ENCODE measurements at regions of chr11 and their contacts with region 1.

Region 1: DNA sequence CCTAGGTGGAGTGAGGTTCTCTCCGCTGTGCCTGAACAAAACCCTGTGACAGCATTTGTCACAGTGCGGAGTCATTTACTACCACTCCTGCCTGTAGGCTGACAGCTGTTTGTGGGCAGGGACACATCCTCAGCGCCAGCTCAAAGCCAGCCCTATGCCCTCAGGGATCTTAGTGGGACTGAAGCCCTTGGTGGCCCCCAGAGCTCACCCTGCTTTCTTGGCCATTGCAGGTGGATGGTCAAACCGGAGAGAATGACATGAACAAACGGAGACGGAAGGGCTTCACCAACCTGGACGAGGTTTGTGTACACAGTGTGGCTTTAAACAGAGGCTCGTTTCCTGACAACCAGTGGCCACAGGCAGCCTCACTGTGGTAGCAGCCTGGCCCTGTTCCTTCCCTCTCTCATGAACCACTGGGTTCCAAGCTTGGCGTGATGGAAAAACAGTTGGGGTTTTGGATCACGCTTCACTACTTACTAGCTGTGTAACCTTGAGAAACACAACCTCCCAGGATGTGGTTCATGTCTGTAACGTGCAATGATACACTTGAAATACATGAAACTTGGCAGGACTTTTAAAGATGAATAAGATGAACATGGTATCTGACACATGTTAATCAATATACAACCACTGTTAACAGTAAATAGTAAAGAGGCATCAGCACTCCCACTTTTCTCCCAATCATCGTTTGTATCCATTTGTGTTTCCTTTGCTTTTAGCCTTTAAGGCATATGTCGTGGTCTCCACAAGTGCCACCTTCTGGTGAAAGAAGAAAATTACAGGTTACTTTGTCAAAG is 125.8 kb downstream of the MICAL2 start:
- DNase-seq: peak; percentile 58 to 62
- ATAC-seq: peak; percentile 51 to 70; a peak in 4 of 6 replicates
- H3K4me3 ChIP-seq: no peak overlapping the region
- H3K27ac ChIP-seq: peak overlapping the region; percentile 81 to 87
- H3K4me1 ChIP-seq: peaks cover 58% of the 10 kb centered on the region
- CTCF ChIP-seq: peak; percentile 83
- EP300 ChIP-seq: no peak
- POLR2A ChIP-seq: no peak
- RAD21 ChIP-seq: peak; percentile 73 to 76

Region 2: DNA sequence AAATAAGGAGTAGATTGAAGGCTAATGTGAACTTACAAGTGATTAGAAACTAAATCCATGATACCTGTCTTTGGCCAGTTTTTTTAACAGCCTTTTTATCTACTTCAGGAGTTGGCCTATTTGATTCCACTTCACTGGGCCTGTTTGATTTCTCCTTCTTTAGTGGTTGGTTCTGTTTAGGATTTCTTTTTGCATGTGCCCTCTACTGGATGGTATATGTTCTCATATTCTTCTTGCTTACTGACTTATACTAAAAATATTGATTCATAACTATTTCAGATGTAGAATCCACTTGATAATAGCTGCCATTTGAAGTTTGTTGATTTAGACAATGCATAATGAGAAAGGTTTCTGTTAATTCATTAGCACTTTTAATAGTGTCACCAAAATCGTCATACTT is 340.5 kb before region 1 on chr11:
- CTCF ChIA-PET with region 1: no interaction called
- POLR2A ChIA-PET with region 1: no interaction called
- DNase-seq: peak in 1 of 2 experiments; percentile 13
- ATAC-seq: peak in 1 of 2 experiments; percentile 60; a peak in 2 of 6 replicates
- H3K4me3 ChIP-seq: no peak overlapping the region
- H3K27ac ChIP-seq: no peak overlapping the region
- H3K4me1 ChIP-seq: peaks cover 6% of the 10 kb centered on the region; the same call in 2 of the 3 replicates
- CTCF ChIP-seq: peak; percentile 28; the same call in 1 of the 3 replicates
- EP300 ChIP-seq: no peak
- POLR2A ChIP-seq: no peak
- RAD21 ChIP-seq: peak in 1 of 2 experiments; percentile 10; a peak in 1 of 5 replicates

Region 3: GRCh38 chr11:12066799-12067508 is 169.2 kb before region 1 on chr11:
- CTCF ChIA-PET with region 1: interaction called, 30 read pairs
- POLR2A ChIA-PET with region 1: interaction called, 4 read pairs
- DNase-seq: peak in 1 of 2 experiments; percentile 93
- ATAC-seq: peak; percentile 83 to 84
- H3K4me3 ChIP-seq: peak overlapping the region; percentile 8; the same call in 1 of the 3 replicates
- H3K27ac ChIP-seq: peak overlapping the region; percentile 97
- H3K4me1 ChIP-seq: peaks cover 66% of the 10 kb centered on the region
- CTCF ChIP-seq: no peak
- EP300 ChIP-seq: peak; percentile 51 to 79; a peak in 3 of 5 replicates
- POLR2A ChIP-seq: no peak
- RAD21 ChIP-seq: no peak

Region 4: DNA sequence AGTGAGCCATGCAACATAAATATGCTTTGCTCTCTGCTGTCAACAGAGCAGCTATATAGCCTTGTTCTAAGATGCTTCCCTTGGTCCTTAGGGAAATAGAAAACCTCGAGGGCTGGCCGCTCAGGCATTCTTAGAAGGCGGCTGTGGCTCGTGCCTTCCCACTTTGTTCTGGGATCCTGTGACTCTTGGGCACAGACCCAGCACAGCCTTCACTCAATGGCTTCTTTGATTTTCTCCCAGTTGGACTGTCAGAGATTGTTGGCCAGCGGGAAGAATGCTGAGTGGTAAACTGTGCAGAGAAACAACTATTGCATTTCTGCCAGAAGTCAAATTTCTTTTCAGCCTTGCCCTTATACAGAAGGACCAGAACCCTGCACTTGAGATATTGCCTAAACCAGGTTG is 135.3 kb before region 1 on chr11:
- CTCF ChIA-PET with region 1: interaction called, 12 read pairs
- POLR2A ChIA-PET with region 1: no interaction called
- DNase-seq: no peak
- ATAC-seq: no peak
- H3K4me3 ChIP-seq: no peak overlapping the region
- H3K27ac ChIP-seq: peak overlapping the region in 1 of 2 experiments; percentile 51; a peak in 2 of 6 replicates
- H3K4me1 ChIP-seq: peaks cover 12% of the 10 kb centered on the region
- CTCF ChIP-seq: no peak
- EP300 ChIP-seq: no peak
- POLR2A ChIP-seq: no peak
- RAD21 ChIP-seq: no peak

Region 5: DNA sequence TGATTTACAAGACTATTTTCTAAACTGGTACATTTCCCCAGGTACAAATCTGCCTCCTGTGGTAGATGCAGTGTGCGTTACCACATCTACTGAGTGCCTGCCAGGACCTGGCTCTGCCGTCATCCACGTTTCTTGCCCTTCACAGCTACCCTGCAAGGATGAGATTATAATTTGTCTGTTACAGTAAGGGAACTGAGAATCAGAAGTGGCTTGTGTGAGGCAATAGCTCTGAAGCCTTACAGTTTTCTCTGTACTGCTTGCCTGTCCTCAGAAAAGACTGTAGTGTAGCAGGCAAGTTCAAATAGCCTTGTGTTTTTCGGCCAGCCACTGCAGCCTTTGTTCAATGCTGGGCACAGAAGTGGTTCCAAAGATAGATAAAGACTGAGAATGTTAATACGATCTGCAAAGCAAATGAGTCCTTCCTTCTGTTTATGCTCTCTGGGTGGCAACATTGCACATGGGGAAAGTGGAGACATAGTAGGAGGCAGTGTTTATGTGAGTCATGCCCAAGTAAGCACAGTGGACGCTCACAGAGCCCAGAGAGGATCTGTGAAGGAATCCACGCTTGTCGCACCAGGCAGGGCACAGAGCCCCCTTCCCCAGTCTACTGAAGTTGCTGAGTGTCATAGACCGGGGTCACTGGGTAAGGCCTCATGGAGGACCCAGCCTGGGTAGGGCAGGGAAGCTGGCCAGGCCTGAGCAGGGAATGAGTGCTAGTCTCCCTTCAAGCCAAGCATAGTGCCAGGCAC is 76.6 kb before region 1 on chr11:
- CTCF ChIA-PET with region 1: interaction called, 45 read pairs
- POLR2A ChIA-PET with region 1: no interaction called
- DNase-seq: peak; percentile 59 to 69
- ATAC-seq: peak; percentile 84 to 89
- H3K4me3 ChIP-seq: no peak overlapping the region
- H3K27ac ChIP-seq: peak overlapping the region; percentile 72 to 90
- H3K4me1 ChIP-seq: peaks cover 50% of the 10 kb centered on the region
- CTCF ChIP-seq: peak; percentile 36; the same call in 2 of the 3 replicates
- EP300 ChIP-seq: no peak; a peak in 1 of 5 replicates
- POLR2A ChIP-seq: no peak
- RAD21 ChIP-seq: peak; percentile 48 to 57

Region 6: GRCh38 chr11:12200279-12201010 is 35.7 kb before region 1 on chr11:
- CTCF ChIA-PET with region 1: interaction called, 13 read pairs
- POLR2A ChIA-PET with region 1: no interaction called
- DNase-seq: no peak
- ATAC-seq: peak in 1 of 2 experiments; percentile 16; a peak in 2 of 6 replicates
- H3K4me3 ChIP-seq: no peak overlapping the region
- H3K27ac ChIP-seq: peak overlapping the region in 1 of 2 experiments; percentile 55; a peak in 3 of 6 replicates
- H3K4me1 ChIP-seq: peaks cover 8% of the 10 kb centered on the region; the same call in 2 of the 3 replicates
- CTCF ChIP-seq: no peak
- EP300 ChIP-seq: no peak
- POLR2A ChIP-seq: no peak
- RAD21 ChIP-seq: no peak

Region 7: GRCh38 chr11:12251666-12252560 is 15.8 kb after region 1 on chr11:
- CTCF ChIA-PET with region 1: interaction called, 22 read pairs
- POLR2A ChIA-PET with region 1: no interaction called
- DNase-seq: no peak
- ATAC-seq: peak in 1 of 2 experiments; percentile 36; a peak in 2 of 6 replicates
- H3K4me3 ChIP-seq: no peak overlapping the region
- H3K27ac ChIP-seq: no peak overlapping the region
- H3K4me1 ChIP-seq: 0 out of 3 replicates have a peak, but pooled peaks cover 5% of the 10 kb centered on the region
- CTCF ChIP-seq: no peak
- EP300 ChIP-seq: no peak
- POLR2A ChIP-seq: no peak
- RAD21 ChIP-seq: no peak

Region 8: GRCh38 chr11:12281571-12282478 is 45.7 kb after region 1 on chr11:
- CTCF ChIA-PET with region 1: interaction called, 96 read pairs
- POLR2A ChIA-PET with region 1: no interaction called
- DNase-seq: peak; percentile 77 to 89
- ATAC-seq: peak; percentile 57 to 83; a peak in 5 of 6 replicates
- H3K4me3 ChIP-seq: no peak overlapping the region
- H3K27ac ChIP-seq: peak overlapping the region; percentile 58 to 80
- H3K4me1 ChIP-seq: peaks cover 38% of the 10 kb centered on the region
- CTCF ChIP-seq: peak; percentile 96
- EP300 ChIP-seq: no peak
- POLR2A ChIP-seq: no peak
- RAD21 ChIP-seq: peak; percentile 99 to 100

Region 9: GRCh38 chr11:12386745-12387144 is 150.6 kb after region 1 on chr11:
- CTCF ChIA-PET with region 1: no interaction called
- POLR2A ChIA-PET with region 1: no interaction called
- DNase-seq: no peak
- ATAC-seq: no peak
- H3K4me3 ChIP-seq: no peak overlapping the region
- H3K27ac ChIP-seq: no peak overlapping the region
- H3K4me1 ChIP-seq: peaks cover 7% of the 10 kb centered on the region; the same call in 1 of the 3 replicates
- CTCF ChIP-seq: no peak
- EP300 ChIP-seq: no peak
- POLR2A ChIP-seq: no peak
- RAD21 ChIP-seq: no peak

Region 10: GRCh38 chr11:12397931-12398334 is 161.8 kb after region 1 on chr11:
- CTCF ChIA-PET with region 1: no interaction called
- POLR2A ChIA-PET with region 1: no interaction called
- DNase-seq: peak in 1 of 2 experiments; percentile 50
- ATAC-seq: peak; percentile 47 to 83; a peak in 5 of 6 replicates
- H3K4me3 ChIP-seq: no peak overlapping the region
- H3K27ac ChIP-seq: peak overlapping the region in 1 of 2 experiments; percentile 38; a peak in 2 of 6 replicates
- H3K4me1 ChIP-seq: peaks cover 9% of the 10 kb centered on the region; the same call in 1 of the 3 replicates
- CTCF ChIP-seq: no peak
- EP300 ChIP-seq: no peak
- POLR2A ChIP-seq: no peak
- RAD21 ChIP-seq: no peak